Right cardiac atrium (tissue), 5 donors: ENCODE measurements at regions of chr15 and their contacts with region 1.

Region 1: DNA sequence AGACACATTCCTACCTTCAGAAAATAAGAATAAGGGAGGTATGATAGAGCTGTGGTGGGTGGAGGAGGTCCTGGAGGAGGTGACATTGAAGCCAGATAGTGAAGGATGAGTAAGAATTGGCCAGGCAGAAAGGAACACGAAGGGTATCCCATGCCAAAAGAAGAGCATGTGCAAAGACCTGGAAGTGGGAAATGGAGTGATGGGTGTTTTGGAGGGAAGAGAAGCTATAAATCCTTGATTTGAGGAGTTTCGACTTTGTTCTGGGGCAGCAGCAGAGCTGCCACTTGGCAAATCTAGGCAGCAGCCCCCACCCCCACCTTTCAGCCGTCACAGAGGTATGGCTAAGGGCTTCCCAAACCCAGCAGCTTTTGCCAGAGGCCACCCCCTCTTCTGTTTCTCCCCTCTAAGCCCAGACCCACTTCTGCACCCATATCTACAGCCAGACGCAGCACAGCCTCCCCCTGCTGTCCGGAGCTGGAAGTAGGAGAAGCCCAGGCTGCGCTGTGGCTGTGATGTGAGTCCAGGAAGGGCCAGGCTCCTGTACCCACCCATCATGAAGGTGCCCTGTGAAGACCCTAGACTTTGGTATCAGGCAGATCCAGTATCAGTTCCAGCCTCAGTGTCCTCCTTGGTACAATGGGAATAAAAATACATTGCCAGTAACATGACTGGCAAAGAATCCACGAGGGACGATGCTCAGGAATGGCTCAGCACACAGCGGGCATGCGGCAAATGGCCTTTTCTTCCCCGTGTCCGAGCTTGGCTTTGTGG is 188.7 kb upstream of the LINGO1 start:
- DNase-seq: peak; percentile 48 to 81 (median 78)
- ATAC-seq: peak; percentile 55 to 73
- H3K4me3 ChIP-seq: no peak overlapping the region
- H3K27ac ChIP-seq: no peak overlapping the region
- H3K4me1 ChIP-seq: no peaks in the 10 kb centered on the region
- H3K27me3 ChIP-seq: no peaks in the 10 kb centered on the region

Region 2: GRCh38 chr15:77633134-77633912 is 188.1 kb before region 1 on chr15:
- intact Hi-C with region 1: loop called in 3 of 4 experiments (anchors 1 to 5 kb)
- DNase-seq: peak; percentile 92 to 97 (median 96)
- ATAC-seq: peak; percentile 92 to 93
- H3K4me3 ChIP-seq: peak overlapping the region; percentile 81
- H3K27ac ChIP-seq: no peak overlapping the region
- H3K4me1 ChIP-seq: no peaks in the 10 kb centered on the region
- H3K27me3 ChIP-seq: no peaks in the 10 kb centered on the region

Region 3: GRCh38 chr15:77642793-77643430 is 178.5 kb before region 1 on chr15:
- intact Hi-C with region 1: loop called in 2 of 4 experiments (anchors 5 to 10 kb)
- DNase-seq: no peak
- ATAC-seq: no peak
- H3K4me3 ChIP-seq: no peak overlapping the region
- H3K27ac ChIP-seq: no peak overlapping the region
- H3K4me1 ChIP-seq: no peaks in the 10 kb centered on the region
- H3K27me3 ChIP-seq: no peaks in the 10 kb centered on the region

Region 4: DNA sequence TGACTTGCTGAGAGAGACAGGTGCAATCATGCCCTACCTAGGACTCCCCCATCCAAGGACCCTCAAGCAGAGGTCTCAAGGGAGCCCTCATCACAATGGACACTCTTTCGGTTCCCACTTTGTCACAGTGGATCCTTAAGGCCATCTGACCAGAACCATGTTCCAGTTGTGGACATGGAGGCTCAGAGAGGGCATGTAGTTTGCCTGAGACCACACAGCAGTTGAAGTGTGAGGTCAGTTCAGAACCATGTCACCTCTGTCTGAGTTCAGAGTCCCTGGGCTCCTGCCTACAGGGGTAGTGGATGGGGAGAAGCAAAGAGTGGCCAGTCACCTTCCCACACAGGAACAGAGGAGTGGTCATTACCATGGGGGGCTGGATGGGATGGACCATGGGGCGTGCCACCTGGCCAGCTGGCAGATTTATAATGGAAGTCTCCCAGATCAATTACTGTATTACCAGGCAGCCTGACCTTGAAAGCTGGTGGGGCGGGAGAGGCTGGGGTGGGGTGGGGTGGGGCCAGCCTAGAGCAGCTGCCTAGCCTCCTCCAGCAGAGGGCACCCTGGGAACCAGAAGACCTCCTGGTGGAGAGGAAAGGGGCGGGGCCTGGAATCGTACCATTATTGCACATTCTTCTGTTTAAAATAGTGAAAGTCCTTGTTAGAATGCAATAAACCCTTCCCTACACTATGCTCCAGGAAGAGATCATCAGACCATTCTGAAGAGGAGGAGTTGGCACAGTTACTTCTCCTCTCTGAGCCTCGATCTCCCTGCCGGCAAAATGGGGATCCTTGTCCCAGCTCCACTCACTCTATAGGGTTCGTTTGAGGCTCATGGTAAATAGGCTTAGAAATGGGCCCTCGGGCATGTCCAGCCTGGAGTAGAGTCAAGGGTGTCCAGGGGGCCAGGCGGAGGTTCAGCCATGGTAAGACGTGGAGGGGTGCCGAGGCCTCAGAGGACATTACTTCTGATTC is 161.7 kb before region 1 on chr15:
- intact Hi-C with region 1: loop called in 2 of 4 experiments (anchors 10 kb)
- DNase-seq: peak; percentile 50 to 78 (median 78)
- ATAC-seq: peak; percentile 52 to 54
- H3K4me3 ChIP-seq: no peak overlapping the region
- H3K27ac ChIP-seq: no peak overlapping the region
- H3K4me1 ChIP-seq: no peaks in the 10 kb centered on the region
- H3K27me3 ChIP-seq: no peaks in the 10 kb centered on the region